Naive thymus-derived CD4-positive, alpha-beta T cell (primary cell): ENCODE measurements at regions of chr18 and their contacts with region 1.

Region 1: DNA sequence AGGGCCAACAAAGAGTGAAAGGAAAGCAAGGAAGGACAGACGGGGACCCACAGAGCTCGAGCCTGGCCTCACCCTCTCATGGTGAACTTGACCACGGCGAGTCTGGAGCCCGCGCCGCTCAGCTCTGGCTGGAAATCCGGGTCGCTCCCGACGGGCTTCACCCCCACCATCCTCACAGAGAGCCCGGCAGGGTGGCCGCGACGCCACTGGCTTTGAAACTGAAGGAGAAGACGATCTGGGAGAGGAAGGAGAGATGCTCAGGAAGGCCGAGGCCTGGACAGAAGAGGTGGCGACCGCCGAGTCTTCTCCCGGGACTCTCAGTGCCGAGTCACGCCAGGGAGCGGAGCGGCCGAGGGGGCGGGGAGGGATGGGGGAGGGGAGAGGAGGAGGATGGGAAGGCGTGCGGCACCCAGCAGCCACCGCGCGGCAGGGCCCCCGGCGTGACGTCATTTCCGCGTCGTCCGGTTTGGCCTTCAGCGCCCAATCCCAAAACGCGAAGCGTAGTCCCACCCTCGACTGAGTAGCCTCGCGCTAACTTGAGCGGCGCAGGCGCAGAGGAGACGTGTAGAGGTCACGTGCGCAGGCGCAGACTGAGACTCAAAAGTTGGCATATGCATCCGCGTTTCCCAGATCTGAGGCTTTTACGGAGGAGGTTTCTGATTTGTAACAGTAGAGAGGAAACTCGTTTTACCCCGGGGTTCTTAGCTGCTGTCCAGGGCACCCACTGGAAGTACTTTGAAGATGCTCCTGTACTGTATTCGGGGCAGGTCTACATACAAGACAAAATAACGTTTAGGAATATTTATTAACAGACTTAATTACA is at the start of gene TXNL1:
- DNase-seq: peak; percentile 95 to 99 (median 97)
- ATAC-seq: peak; percentile 98
- H3K4me3 ChIP-seq: peak within 1 kb of the TSS; percentile 69
- H3K4me3 Mint-ChIP-seq: peak within 1 kb of the TSS; percentile 88 to 100 (median 98)
- H3K27ac ChIP-seq: peak within 1 kb of the TSS; percentile 91
- H3K27ac Mint-ChIP-seq: peak within 1 kb of the TSS; percentile 93 to 99 (median 97)
- H3K4me1 ChIP-seq: peaks cover 17 to 20% of the 10 kb centered on the region in 2 donors
- H3K4me1 Mint-ChIP-seq: peaks cover 36 to 57% (median 49%) of the 10 kb centered on the region in 7 donors
- H3K27me3 ChIP-seq: no peaks in the 10 kb centered on the region
- H3K27me3 Mint-ChIP-seq: no peaks in the 10 kb centered on the region
- total RNA-seq, gene TXNL1: 32.4 to 65.5 (median 42.8) TPM

Region 2: DNA sequence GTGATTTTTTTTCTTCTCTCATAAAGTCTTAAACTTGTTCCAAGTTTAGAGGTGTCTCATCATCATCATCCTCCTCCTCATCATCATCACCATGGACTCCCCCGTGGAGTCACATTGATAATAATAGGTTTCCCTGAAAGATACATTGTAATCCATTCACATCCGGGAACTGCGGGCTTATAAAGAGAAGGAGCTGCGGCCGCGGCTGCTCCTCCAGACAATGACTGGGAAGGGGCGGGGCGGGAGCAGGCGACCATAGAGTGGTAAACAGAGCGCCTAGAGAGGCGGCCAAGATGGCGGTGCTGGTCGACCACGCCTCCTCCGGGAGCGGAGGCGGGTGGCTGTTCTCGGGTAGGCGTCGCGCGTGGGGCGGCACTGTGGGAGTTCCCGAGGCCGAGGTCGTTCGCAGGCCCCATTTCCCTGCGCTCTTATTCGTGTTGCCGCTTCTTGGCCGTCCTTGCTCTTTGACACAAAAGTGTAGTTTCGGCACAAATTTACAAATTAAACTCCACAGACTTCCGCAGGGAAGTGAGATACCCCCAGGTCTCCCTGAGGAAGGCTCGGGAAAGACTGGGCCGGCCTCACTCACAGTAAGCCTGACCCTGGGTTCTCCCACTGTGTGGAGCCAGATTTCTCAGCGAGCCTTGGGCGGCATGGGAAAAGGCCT is 1048.7 kb before region 1 on chr18:
- CTCF ChIA-PET with region 1: no interaction called
- POLR2A ChIA-PET with region 1: no interaction called
- intact Hi-C with region 1: loop called (anchors 2 to 5 kb)
- DNase-seq: peak; percentile 61 to 89 (median 77)
- ATAC-seq: peak; percentile 97
- H3K4me3 ChIP-seq: peak overlapping the region; percentile 25
- H3K4me3 Mint-ChIP-seq: peak overlapping the region; percentile 82 to 94 (median 89)
- H3K27ac ChIP-seq: peak overlapping the region; percentile 53
- H3K27ac Mint-ChIP-seq: peak overlapping the region; percentile 25 to 86 (median 75)
- H3K4me1 ChIP-seq: no peaks in the 10 kb centered on the region
- H3K4me1 Mint-ChIP-seq: peaks cover 12 to 42% (median 36%) of the 10 kb centered on the region in 7 donors
- H3K27me3 ChIP-seq: peaks cover 0 to 8% of the 10 kb centered on the region in 2 donors
- H3K27me3 Mint-ChIP-seq: peaks cover 38 to 70% (median 48%) of the 10 kb centered on the region in 5 donors

Region 3: DNA sequence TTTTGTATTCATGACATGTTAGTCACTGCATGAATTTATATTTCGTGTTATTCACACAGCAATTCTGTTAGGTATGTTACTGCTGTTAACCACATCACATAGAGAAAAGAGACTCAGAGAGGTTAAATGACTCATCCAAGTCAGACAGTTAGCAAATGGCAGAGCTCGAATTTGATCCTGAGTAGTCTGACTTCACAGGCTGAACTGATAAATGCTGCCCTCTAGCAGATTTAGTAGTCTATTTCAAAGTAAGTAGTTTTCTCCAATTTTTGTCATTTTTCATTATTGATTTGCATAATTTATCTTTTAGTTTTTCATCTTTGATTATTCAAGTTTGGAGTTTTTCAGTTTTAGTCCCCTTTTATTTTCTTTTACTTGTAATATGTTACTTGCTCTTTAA is 71.0 kb after region 1 on chr18:
- CTCF ChIA-PET with region 1: interaction called, 3 read pairs
- POLR2A ChIA-PET with region 1: interaction called, 4 read pairs
- intact Hi-C with region 1: loop called (anchors 1 to 5 kb)
- DNase-seq: peak in 7 of 9 donors; percentile 18 to 56 (median 48)
- ATAC-seq: peak; percentile 100
- H3K4me3 ChIP-seq: no peak overlapping the region
- H3K4me3 Mint-ChIP-seq: no peak overlapping the region
- H3K27ac ChIP-seq: no peak overlapping the region
- H3K27ac Mint-ChIP-seq: no peak overlapping the region
- H3K4me1 ChIP-seq: no peaks in the 10 kb centered on the region
- H3K4me1 Mint-ChIP-seq: peaks cover 0 to 13% (median 4%) of the 10 kb centered on the region in 7 donors
- H3K27me3 ChIP-seq: no peaks in the 10 kb centered on the region
- H3K27me3 Mint-ChIP-seq: no peaks in the 10 kb centered on the region

Region 4: DNA sequence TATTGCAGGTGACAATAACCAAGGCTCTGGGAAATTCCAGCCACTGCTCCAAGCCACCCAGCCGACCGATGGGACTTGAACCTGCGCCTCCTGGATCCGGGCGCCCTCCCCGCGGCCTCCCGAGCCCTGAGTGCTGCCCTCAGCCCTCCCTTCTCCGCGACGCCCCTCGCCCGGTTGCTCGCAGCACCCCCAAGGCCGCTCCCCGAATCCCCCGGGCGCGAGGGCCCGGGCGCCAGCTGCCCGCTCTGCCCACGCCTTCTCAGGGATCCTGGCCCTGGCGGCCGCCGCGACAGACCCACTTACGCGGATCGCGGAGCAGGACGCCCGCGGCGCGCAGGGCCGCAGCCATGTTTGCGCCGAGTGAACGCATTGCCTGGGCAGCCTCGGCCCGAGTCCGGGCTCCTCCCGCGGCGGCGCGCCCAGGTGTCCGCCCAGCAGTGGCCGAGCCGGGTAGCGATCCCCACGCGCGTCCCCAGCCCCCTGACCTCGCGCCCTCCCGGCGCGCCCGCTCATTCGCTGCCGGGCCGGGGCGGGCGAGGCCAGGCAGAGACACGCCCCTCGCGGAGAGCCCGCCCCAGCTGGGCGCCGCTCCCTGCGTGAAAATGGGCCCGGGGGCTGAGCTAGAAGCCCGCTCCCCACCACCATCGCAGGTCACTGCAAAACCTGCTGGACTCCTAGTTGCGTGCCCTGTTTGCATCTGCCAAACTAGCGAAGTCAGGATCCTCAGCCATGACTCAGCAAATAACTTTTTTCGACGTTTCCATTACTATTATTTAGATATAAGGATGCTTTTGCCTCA is 948.0 kb after region 1 on chr18 and contains the start of gene FECH:
- CTCF ChIA-PET with region 1: no interaction called
- POLR2A ChIA-PET with region 1: no interaction called
- intact Hi-C with region 1: loop called in 1 of 2 experiments (anchors 1 kb)
- DNase-seq: peak; percentile 59 to 81 (median 73)
- ATAC-seq: peak; percentile 98
- H3K4me3 ChIP-seq: peak within 1 kb of the TSS; percentile 61
- H3K4me3 Mint-ChIP-seq: peak within 1 kb of the TSS; percentile 81 to 95 (median 89)
- H3K27ac ChIP-seq: peak within 1 kb of the TSS; percentile 75
- H3K27ac Mint-ChIP-seq: peak within 1 kb of the TSS; percentile 65 to 90 (median 83)
- H3K4me1 ChIP-seq: peaks cover 9 to 11% of the 10 kb centered on the region in 2 donors
- H3K4me1 Mint-ChIP-seq: peaks cover 10 to 35% (median 23%) of the 10 kb centered on the region in 7 donors
- H3K27me3 ChIP-seq: no peaks in the 10 kb centered on the region
- H3K27me3 Mint-ChIP-seq: no peaks in the 10 kb centered on the region
- total RNA-seq, gene FECH: 11.7 to 15.3 (median 13.5) TPM

Region 5: DNA sequence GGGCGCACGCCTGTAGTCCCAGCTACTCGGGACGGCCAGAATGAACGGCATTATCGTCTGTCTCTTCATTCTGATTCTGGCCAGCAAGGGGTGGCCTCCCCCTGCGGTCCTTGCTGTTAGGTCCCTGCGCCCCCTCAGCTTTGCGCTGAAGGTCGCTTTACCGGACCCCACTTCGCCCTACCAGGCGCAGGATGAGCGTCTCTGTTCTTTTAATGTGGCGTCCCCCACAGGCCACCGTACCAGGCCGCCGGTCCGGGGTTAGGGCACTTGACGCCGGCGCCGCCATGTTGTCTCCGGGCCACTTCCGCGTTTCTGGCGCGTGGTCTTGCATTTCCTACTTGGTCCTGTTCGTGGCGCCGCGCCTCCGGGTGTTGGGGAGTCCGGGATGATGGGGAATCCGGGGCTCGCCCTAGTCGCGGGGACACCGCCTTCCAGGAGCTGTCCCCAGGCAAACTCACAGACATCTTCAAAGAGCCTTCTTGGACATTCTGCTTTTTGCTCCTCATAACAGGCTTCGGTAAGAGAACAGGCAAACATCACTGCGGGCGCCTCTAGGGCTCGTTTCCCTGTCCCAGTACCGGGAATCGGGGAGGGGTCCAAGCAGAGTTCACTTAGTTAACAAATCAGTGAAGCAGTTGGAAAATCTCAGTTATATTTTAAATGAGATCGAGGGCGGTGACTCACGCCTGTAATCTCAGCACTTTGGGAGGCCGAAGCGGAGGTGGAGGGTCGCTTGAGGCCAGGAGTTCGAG is 991.7 kb after region 1 on chr18:
- CTCF ChIA-PET with region 1: no interaction called
- POLR2A ChIA-PET with region 1: no interaction called
- intact Hi-C with region 1: loop called in 1 of 2 experiments (anchors 1 kb)
- DNase-seq: peak; percentile 89 to 95 (median 93)
- ATAC-seq: peak; percentile 99
- H3K4me3 ChIP-seq: peak overlapping the region; percentile 88
- H3K4me3 Mint-ChIP-seq: peak overlapping the region; percentile 88 to 98 (median 96)
- H3K27ac ChIP-seq: peak overlapping the region; percentile 79
- H3K27ac Mint-ChIP-seq: peak overlapping the region; percentile 84 to 99 (median 97)
- H3K4me1 ChIP-seq: peaks cover 10 to 11% of the 10 kb centered on the region in 2 donors
- H3K4me1 Mint-ChIP-seq: peaks cover 9 to 23% (median 20%) of the 10 kb centered on the region in 7 donors
- H3K27me3 ChIP-seq: no peaks in the 10 kb centered on the region
- H3K27me3 Mint-ChIP-seq: no peaks in the 10 kb centered on the region